ENCODE measurements at regions of chr4 and their contacts with region 1.

Region 1: GRCh38 chr4:23305026-23305425 is 584.8 kb downstream of the PPARGC1A start:
- DNase-seq: no peak
- H3K4me3 Mint-ChIP-seq: no peak overlapping the region
- H3K27ac Mint-ChIP-seq: no peak overlapping the region
- H3K4me1 Mint-ChIP-seq: peaks cover 7% of the 10 kb centered on the region
- H3K27me3 Mint-ChIP-seq: no peaks in the 10 kb centered on the region

Region 2: GRCh38 chr4:23290656-23291055 is 14.4 kb before region 1 on chr4:
- CTCF ChIA-PET with region 1: no interaction called
- intact Hi-C with region 1: loop called (anchors 1 kb)
- DNase-seq: no peak
- H3K4me3 Mint-ChIP-seq: no peak overlapping the region
- H3K27ac Mint-ChIP-seq: no peak overlapping the region
- H3K4me1 Mint-ChIP-seq: peaks cover 17% of the 10 kb centered on the region
- H3K27me3 Mint-ChIP-seq: no peaks in the 10 kb centered on the region

Region 3: GRCh38 chr4:23324021-23324690 is 19.1 kb after region 1 on chr4:
- CTCF ChIA-PET with region 1: interaction called, 5 read pairs
- intact Hi-C with region 1: loop called (anchors 1 kb)
- DNase-seq: peak; percentile 12
- H3K4me3 Mint-ChIP-seq: no peak overlapping the region
- H3K27ac Mint-ChIP-seq: no peak overlapping the region
- H3K4me1 Mint-ChIP-seq: peaks cover 27% of the 10 kb centered on the region
- H3K27me3 Mint-ChIP-seq: no peaks in the 10 kb centered on the region

Region 4: DNA sequence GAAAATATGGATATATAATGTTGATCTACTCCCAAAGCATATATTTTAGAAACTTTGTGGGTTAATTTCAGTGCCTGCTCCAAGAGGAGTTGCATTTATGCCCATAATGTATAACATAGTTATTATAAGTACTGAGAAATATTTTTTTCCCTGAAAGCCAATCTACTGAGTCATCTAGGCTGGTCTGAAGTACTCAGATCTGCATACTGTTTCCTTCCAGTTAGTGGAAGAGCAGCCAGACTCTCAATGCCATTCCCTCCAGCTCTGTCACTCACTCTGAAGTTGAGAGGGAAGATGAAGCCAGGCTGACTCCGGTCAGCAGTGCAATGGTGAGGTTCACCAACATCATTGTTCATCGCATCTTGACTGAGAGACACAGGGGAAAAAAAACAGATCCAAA is 79.7 kb after region 1 on chr4:
- CTCF ChIA-PET with region 1: no interaction called
- intact Hi-C with region 1: no loop called
- DNase-seq: no peak
- H3K4me3 Mint-ChIP-seq: no peak overlapping the region
- H3K27ac Mint-ChIP-seq: no peak overlapping the region
- H3K4me1 Mint-ChIP-seq: no peaks in the 10 kb centered on the region
- H3K27me3 Mint-ChIP-seq: peaks cover 5% of the 10 kb centered on the region

Measured in activated naive CD4-positive, alpha-beta T cell treated with anti-CD3 and anti-CD28 coated beads for 36 hours (primary cell).